ENCODE measurements at regions of chr22 and their contacts with region 1.

Region 1: GRCh38 chr22:43553451-43554258 is 141.8 kb downstream of the MPPED1 start:
- DNase-seq: peak; percentile 50

Region 2: GRCh38 chr22:43633631-43634285 is 80.1 kb after region 1 on chr22:
- intact Hi-C with region 1: loop called in 1 of 2 experiments (anchors 2 kb)
- DNase-seq: no peak

Measured in posterior vena cava (tissue), 2 donors.